ENCODE measurements at regions of chrX and their contacts with region 1.

Region 1: DNA sequence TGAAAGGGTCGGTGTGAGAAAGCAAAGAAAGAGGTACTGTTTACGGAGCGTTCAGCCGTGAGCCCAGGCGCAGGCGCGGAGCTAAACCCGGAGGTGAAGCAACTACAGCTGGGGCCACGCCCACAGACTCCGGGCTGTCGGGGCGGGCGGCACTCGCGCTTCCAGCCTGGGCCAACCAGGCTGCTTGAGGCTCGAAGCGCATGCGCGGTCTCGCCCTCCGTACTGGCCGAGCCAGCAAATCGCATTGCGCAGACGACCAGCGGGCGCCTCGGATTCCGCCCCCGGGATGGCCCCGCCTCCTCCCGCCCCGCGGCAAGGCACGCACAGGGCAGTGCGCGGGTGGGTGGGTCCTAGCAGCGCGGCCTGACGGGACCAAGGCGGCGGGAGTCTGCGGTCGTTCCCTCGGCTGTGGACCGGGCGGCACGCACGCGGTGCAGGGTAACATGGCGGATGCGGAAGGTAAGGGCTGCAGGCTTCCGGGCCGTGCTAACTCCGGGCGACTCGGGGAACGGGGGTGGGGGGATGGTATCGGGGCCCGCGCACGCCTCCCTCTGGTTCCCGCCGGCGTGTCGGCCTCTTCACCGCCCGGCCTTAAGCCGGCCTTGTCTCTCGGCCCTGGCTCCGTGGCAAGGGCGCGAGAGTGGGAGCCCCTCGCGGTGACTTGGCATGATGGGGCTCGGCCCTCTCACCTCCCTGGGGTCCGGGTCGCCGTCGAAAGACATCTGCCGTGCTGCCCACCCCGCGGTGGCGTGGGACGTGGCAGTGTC is at the start of gene DKC1:
- DNase-seq: peak; percentile 95
- H3K4me3 Mint-ChIP-seq: peak within 1 kb of the TSS; percentile 88
- H3K27ac Mint-ChIP-seq: peak within 1 kb of the TSS; percentile 94
- H3K4me1 Mint-ChIP-seq: peaks cover 33% of the 10 kb centered on the region
- H3K27me3 Mint-ChIP-seq: no peaks in the 10 kb centered on the region
- total RNA-seq, gene DKC1: 124 to 127 TPM

Region 2: DNA sequence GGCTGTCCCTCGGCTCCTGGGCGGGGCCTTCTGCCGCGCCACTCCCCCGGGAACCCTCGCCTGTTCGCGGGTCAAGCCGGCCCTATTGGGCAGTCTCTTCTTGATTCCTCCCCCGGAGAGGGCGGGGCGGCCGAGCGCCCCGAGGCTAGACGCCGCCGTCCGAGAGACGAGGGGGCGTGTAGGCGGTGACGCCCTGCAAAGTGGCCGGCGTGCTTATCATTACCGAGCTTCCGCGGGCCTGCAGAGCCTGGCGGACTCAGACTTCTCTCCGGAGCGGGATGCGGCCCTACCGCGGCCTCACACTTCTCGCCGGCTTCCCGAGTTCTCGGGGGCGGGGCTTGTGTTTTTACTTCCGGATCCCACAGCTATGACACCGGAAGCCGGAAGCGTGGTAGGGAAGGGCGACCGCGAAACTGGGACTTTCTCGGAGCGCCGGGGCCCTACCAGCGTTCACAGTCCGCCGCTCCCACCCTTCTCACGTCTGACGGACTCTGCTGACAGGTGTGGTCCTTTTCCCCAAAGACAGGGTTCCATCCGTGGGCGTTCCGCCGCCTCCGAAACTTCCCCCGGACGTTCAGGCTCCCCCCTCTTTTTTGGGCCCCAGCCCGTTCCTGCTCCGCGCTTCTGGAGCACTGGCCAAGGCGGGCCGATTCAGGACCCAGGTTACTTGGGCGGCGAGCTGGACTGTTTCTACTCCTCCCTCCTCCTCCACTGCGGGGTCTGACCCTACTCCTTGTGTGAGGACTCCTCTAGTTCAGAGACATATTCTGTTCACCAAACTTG is 215.3 kb before region 1 on chrX and contains the start of gene IKBKG:
- CTCF ChIA-PET with region 1: no interaction called
- intact Hi-C with region 1: loop called (anchors 1 kb)
- DNase-seq: peak; percentile 93
- H3K4me3 Mint-ChIP-seq: peak within 1 kb of the TSS; percentile 97
- H3K27ac Mint-ChIP-seq: peak within 1 kb of the TSS; percentile 96
- H3K4me1 Mint-ChIP-seq: peaks cover 63% of the 10 kb centered on the region
- H3K27me3 Mint-ChIP-seq: no peaks in the 10 kb centered on the region
- total RNA-seq, gene IKBKG: 42.2 to 42.6 TPM

Region 3: GRCh38 chrX:154799554-154800348 is 37.0 kb after region 1 on chrX:
- CTCF ChIA-PET with region 1: interaction called, 3 read pairs
- intact Hi-C with region 1: loop called (anchors 1 kb)
- DNase-seq: no peak
- H3K4me3 Mint-ChIP-seq: no peak overlapping the region
- H3K27ac Mint-ChIP-seq: peak overlapping the region; percentile 88
- H3K4me1 Mint-ChIP-seq: peaks cover 61% of the 10 kb centered on the region
- H3K27me3 Mint-ChIP-seq: no peaks in the 10 kb centered on the region

Region 4: DNA sequence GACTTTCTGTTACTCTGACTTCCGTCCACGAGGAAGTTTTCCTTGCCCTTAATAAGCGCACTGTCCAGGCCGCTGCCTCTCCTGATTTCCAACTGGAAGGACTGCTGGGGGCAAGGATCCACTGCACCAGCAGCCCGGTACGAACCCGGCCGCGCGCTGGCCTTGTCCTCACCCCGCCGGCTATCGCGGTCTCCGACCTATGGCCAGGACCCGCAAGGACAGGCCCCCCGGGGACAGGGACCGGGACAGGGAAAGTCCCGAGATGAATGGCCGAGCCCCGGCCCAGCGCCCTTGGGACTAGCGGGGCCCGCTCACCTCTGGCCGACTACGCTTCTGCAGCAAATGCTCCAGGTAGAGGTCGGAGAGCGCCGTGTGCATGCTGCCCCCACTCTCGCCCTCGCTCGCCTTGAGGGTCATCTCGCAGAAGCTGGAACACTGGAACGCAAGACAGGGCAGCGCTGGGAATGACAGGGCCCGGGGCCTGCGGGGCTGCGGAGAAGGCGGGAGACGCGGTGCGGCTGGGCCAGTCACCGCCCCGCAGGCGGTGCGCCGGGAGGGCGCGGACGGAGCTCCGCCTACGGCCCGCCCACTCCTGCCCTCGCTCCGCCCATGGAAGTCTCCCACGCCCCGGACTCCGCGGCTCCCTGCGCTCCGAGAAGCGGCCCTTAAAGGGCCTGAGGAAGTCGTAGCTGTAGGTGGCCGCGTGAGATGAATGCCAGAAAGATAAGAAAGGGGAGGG is 42.4 kb after region 1 on chrX and contains the start of gene MPP1:
- CTCF ChIA-PET with region 1: interaction called, 3 read pairs
- intact Hi-C with region 1: loop called (anchors 2 kb)
- DNase-seq: peak; percentile 78
- H3K4me3 Mint-ChIP-seq: peak within 1 kb of the TSS; percentile 74
- H3K27ac Mint-ChIP-seq: no peak within 1 kb of the TSS
- H3K4me1 Mint-ChIP-seq: peaks cover 38% of the 10 kb centered on the region
- H3K27me3 Mint-ChIP-seq: no peaks in the 10 kb centered on the region
- total RNA-seq, gene MPP1: 23.9 to 24.3 TPM

Region 5: DNA sequence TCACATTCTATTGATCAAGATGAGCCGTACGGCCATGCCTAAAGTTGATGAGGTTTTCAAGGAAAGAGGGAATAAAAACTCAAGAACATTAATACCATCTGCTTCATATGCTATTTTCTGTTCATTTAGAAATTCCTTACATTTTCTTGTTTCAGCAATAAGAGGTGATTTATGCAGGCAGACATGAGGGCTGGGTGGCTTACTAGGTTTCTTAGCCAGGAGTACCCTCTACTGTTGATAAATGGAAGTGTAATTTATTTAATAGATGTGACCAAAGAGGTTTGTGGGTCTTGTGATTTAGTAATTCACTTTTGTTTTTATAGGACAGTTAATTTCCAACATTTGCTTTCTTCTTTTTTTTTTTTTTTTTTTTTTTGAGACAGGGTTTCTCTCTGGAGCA is 78.2 kb after region 1 on chrX:
- CTCF ChIA-PET with region 1: interaction called, 3 read pairs
- intact Hi-C with region 1: loop called (anchors 2 kb)
- DNase-seq: peak; percentile 8
- H3K4me3 Mint-ChIP-seq: no peak overlapping the region
- H3K27ac Mint-ChIP-seq: no peak overlapping the region
- H3K4me1 Mint-ChIP-seq: no peaks in the 10 kb centered on the region
- H3K27me3 Mint-ChIP-seq: no peaks in the 10 kb centered on the region